ENCODE measurements at regions of chr13 and their contacts with region 1.

Region 1: DNA sequence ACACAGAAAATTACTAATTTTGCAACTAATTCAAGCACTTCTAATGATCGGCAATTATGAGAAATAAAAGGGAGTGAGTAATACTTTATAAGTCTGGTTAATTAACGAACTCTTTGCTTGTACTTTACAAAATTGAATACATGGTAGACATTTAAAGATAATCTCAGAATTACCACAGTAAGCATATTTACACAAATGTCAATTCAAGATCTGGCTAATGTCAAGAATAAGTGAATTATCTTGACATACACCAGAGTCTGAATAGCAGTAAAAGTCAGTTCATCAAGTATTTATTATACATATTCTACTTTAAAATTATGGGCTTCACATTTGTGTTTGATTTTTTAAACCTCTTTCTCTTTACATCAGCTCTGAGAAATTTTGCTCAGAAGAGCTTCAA is 643.4 kb downstream of the OLFM4 start:
- DNase-seq: no peak

Region 2: DNA sequence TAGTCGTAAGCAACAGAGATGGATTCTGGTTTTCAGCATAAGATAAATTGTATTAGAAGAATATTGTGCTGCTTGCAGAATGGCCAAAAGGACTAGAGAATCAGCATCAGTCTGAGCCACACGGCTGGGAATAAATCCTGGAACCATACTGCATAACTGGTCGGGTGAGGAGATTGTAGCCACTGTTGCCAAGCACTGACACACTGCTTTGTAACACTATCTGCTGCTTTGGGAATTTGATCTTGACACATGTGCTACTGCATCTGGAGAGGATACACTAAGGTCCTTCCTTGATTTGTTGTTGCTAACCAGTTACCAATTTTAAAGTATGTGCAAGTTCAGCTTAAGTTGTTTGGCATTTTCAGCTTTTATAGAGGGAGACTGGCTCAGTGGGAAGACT is 1027.9 kb before region 1 on chr13:
- intact Hi-C with region 1: no loop called
- DNase-seq: no peak

Region 3: DNA sequence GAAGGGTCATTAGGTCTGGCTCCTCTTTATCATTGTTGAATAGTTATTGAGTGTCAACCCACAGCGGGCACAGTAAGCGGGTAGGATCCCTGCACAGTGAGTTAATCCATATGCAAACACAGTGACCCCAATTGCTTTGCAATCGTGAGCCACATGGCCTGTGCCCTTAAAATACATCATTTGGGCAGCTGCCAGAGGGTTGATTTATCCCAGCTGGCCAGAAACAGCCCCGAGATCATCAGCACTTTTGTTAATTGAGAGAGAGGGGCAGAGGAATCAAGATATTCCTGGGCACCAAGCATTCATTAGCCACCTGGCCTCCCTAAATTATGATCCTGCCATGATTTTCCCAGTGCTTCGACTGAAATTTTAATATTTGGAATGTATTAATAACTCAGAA is 922.6 kb before region 1 on chr13:
- intact Hi-C with region 1: loop called in 1 of 2 experiments (anchors 5 kb)
- DNase-seq: no peak